ENCODE measurements at regions of chr18 and their contacts with region 1.

Region 1: GRCh38 chr18:63161761-63162195 is 157.8 kb downstream of the BCL2 start:
- DNase-seq: peak; percentile 94
- H3K4me3 Mint-ChIP-seq: peak overlapping the region; percentile 74
- H3K27ac Mint-ChIP-seq: peak overlapping the region; percentile 99
- H3K4me1 Mint-ChIP-seq: peaks cover 93% of the 10 kb centered on the region
- H3K27me3 Mint-ChIP-seq: no peaks in the 10 kb centered on the region

Region 2: GRCh38 chr18:63105636-63106316 is 56.0 kb before region 1 on chr18:
- CTCF ChIA-PET with region 1: no interaction called
- intact Hi-C with region 1: loop called (anchors 1 kb)
- DNase-seq: no peak
- H3K4me3 Mint-ChIP-seq: no peak overlapping the region
- H3K27ac Mint-ChIP-seq: no peak overlapping the region
- H3K4me1 Mint-ChIP-seq: peaks cover 27% of the 10 kb centered on the region
- H3K27me3 Mint-ChIP-seq: no peaks in the 10 kb centered on the region

Region 3: DNA sequence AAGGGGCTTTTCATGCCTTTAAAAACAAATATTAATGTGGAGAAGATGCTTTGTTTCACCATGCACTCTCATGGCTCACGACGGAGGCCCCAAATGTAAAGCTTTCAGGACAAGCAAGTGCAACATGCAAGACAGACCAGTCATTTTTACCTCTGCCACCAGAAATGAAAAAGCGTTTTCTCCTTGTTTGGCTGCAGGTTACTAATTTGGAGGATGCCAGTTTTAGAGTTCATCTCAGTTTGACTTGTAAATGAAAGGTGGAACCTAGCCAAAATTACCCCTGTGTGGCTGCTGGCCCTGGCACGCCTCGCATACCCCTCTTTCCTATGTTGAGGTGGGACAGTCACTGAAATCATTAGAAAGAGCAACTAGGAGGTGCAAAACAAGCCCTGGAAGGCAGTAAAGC is 19.2 kb after region 1 on chr18:
- CTCF ChIA-PET with region 1: interaction called, 4 read pairs
- intact Hi-C with region 1: loop called (anchors 1 kb)
- DNase-seq: peak; percentile 42
- H3K4me3 Mint-ChIP-seq: no peak overlapping the region
- H3K27ac Mint-ChIP-seq: no peak overlapping the region
- H3K4me1 Mint-ChIP-seq: peaks cover 71% of the 10 kb centered on the region
- H3K27me3 Mint-ChIP-seq: no peaks in the 10 kb centered on the region

Region 4: DNA sequence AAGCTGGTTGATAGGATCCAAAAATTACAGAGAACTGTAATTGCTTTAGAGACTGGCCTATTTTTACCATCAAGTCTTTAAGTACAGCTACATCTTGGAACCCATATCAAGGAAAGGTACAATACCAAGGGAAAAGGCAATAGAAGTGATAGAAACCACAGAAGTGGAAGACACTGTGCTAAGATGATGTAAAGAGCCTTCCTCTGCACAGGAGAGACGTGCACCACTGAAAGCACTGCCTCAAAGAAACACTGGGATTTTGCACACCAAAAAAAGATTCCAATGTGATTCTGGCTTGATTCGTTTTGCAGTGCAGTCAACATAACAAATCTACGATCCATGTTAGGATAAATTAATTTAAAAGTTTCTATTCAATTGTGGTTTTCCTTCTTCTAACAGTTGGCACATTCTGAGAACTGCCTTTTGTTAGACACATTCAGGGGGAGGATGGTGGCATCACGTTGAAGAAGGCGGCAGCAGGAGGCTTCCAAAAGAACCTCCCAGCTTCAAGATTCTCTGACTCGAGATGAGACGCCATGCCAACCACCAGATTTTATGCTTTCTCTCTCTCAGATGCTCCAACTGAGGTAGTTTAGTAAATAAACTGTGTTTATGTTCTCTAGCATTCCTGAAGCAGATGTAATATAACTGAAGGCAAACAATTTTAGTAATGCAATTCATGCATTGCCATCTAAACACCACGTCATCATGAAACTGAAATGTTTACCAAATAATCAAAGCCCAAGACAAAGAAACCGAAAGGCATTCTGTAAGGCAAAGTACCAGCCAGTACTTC is 54.9 kb after region 1 on chr18:
- CTCF ChIA-PET with region 1: interaction called, 5 read pairs
- intact Hi-C with region 1: loop called (anchors 1 kb)
- DNase-seq: peak; percentile 48
- H3K4me3 Mint-ChIP-seq: peak overlapping the region; percentile 64
- H3K27ac Mint-ChIP-seq: peak overlapping the region; percentile 94
- H3K4me1 Mint-ChIP-seq: peaks cover 89% of the 10 kb centered on the region
- H3K27me3 Mint-ChIP-seq: no peaks in the 10 kb centered on the region

Region 5: GRCh38 chr18:63367053-63367953 is 205.5 kb after region 1 on chr18 and contains the start of gene KDSR:
- CTCF ChIA-PET with region 1: no interaction called
- intact Hi-C with region 1: loop called (anchors 1 kb)
- DNase-seq: peak; percentile 85
- H3K4me3 Mint-ChIP-seq: peak within 1 kb of the TSS; percentile 84
- H3K27ac Mint-ChIP-seq: peak within 1 kb of the TSS; percentile 79
- H3K4me1 Mint-ChIP-seq: peaks cover 26% of the 10 kb centered on the region
- H3K27me3 Mint-ChIP-seq: no peaks in the 10 kb centered on the region
- total RNA-seq, gene KDSR: 75.2 to 81.5 TPM